ENCODE measurements at regions of chr2 and their contacts with region 1.

Region 1: DNA sequence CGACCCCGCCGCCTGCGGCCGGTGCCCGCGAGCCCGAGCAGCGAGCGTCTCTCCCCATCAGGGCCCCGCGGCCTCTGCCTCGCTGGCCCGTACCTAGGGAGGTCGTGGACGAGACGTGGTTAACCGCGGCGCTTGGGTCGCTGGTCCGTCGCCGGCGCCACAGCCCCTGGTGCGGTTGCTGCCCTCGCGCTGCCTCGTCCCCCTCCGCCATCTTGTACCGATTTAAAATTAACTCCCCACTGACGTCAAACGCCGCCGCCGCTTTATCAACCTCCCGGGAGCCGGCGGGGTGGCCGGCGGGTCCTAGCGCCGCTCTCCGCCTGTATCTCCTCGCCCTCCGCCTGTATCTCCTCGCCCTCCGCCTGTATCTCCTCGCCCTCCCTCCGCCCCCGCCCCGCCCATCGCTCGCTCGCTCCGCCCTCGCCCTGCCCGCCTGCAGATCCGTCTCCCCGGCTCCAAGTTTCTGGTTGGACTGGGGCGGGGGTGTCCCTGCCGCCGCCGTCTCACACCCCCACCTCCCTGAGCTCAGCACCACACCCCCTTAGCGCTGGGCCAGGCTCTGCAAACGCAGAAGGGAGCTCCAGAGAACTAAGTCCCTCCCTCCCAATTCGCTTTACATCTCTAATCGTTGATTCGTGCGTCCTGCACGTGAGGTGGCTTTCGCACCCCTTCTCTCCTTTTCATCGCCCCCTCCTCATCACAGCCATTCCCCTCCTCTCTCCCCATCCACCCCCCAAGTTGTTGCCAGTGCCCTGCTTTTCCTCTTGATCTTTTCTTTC is at the start of gene ATL2:
- DNase-seq: peak; percentile 91 to 97 (median 92)
- ATAC-seq: peak; percentile 80
- H3K4me3 ChIP-seq: peak within 1 kb of the TSS; percentile 91
- H3K27ac ChIP-seq: peak within 1 kb of the TSS; percentile 96
- H3K4me1 ChIP-seq: peaks cover 11 to 34% of the 10 kb centered on the region in 2 experiments
- H3K27me3 ChIP-seq: no peaks in the 10 kb centered on the region
- CTCF ChIP-seq: no peak
- EP300 ChIP-seq: peak; percentile 40
- POLR2A ChIP-seq: peak; percentile 92
- RAD21 ChIP-seq: no peak
- polyA plus RNA-seq, gene ATL2: 12.0 to 18.3 TPM

Region 2: GRCh38 chr2:38362232-38362631 is 15.0 kb before region 1 on chr2:
- CTCF ChIA-PET with region 1: no interaction called
- POLR2A ChIA-PET with region 1: interaction called, 111 read pairs
- in situ Hi-C with region 1: no loop called
- intact Hi-C with region 1: no loop called
- DNase-seq: no peak
- ATAC-seq: no peak
- H3K4me3 ChIP-seq: no peak overlapping the region
- H3K27ac ChIP-seq: no peak overlapping the region
- H3K4me1 ChIP-seq: peaks cover 22 to 45% of the 10 kb centered on the region in 2 experiments
- H3K27me3 ChIP-seq: no peaks in the 10 kb centered on the region
- CTCF ChIP-seq: no peak
- EP300 ChIP-seq: no peak
- POLR2A ChIP-seq: no peak
- RAD21 ChIP-seq: no peak

Region 3: DNA sequence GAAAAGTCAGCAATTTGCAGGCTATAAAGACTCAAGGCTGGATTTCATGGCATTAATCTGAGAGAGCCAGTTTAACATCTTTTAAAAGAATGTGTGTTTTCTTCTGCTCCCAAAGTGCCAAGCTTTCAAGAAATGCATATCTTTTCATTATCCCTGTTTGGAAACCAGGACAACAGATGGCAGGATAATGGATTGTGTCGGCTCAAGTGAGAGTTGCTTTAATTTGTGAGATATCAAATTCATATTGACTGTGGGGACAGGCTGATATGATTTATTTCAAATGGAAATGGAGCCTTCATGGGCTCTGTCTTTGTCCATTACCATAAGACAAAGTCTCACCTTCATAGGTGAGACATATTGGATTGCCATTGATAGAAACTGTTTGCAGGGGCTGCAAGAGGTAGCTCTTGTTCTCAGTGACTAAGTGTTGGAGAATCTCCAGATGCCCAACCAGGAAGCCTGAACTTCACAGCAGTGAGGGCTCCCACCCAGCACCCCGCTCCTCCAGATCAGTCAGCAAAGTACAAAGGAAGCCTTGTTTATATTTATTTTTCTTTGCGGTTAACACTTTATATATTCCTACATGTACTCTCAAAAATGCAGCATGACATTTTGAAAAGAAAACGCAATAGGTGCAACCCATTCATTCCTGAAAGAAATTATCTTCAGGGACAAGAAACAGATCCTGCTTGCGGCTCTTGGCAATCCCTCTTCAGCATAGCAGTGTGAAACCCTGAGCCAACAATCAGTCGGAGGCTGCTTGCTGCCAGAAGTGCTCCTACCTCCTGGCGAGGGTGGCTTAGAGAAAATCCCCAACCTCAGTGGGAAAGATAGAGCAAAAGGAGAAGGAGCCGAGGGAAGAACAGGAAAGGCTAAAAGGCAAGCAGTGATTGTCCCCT is 65.7 kb after region 1 on chr2:
- CTCF ChIA-PET with region 1: no interaction called
- POLR2A ChIA-PET with region 1: no interaction called
- in situ Hi-C with region 1: no loop called
- intact Hi-C with region 1: loop called (anchors 5 kb)
- DNase-seq: no peak
- ATAC-seq: no peak
- H3K4me3 ChIP-seq: no peak overlapping the region
- H3K27ac ChIP-seq: no peak overlapping the region
- H3K4me1 ChIP-seq: peaks cover 0 to 20% of the 10 kb centered on the region in 2 experiments; a peak in 4 of 5 replicates
- H3K27me3 ChIP-seq: peaks cover 8 to 19% of the 10 kb centered on the region in 2 experiments; a peak in 4 of 5 replicates
- CTCF ChIP-seq: no peak
- EP300 ChIP-seq: no peak
- POLR2A ChIP-seq: no peak
- RAD21 ChIP-seq: no peak

Region 4: GRCh38 chr2:38462109-38462759 is 85.0 kb after region 1 on chr2:
- CTCF ChIA-PET with region 1: no interaction called
- POLR2A ChIA-PET with region 1: no interaction called
- in situ Hi-C with region 1: no loop called
- intact Hi-C with region 1: no loop called
- DNase-seq: peak; percentile 39 to 70 (median 54)
- ATAC-seq: peak; percentile 84
- H3K4me3 ChIP-seq: no peak overlapping the region
- H3K27ac ChIP-seq: no peak overlapping the region
- H3K4me1 ChIP-seq: peaks cover 4 to 8% of the 10 kb centered on the region in 2 experiments; a peak in 4 of 5 replicates
- H3K27me3 ChIP-seq: peaks cover 0 to 9% of the 10 kb centered on the region in 2 experiments; a peak in 1 of 5 replicates
- CTCF ChIP-seq: no peak
- EP300 ChIP-seq: no peak
- POLR2A ChIP-seq: no peak
- RAD21 ChIP-seq: no peak

Region 5: DNA sequence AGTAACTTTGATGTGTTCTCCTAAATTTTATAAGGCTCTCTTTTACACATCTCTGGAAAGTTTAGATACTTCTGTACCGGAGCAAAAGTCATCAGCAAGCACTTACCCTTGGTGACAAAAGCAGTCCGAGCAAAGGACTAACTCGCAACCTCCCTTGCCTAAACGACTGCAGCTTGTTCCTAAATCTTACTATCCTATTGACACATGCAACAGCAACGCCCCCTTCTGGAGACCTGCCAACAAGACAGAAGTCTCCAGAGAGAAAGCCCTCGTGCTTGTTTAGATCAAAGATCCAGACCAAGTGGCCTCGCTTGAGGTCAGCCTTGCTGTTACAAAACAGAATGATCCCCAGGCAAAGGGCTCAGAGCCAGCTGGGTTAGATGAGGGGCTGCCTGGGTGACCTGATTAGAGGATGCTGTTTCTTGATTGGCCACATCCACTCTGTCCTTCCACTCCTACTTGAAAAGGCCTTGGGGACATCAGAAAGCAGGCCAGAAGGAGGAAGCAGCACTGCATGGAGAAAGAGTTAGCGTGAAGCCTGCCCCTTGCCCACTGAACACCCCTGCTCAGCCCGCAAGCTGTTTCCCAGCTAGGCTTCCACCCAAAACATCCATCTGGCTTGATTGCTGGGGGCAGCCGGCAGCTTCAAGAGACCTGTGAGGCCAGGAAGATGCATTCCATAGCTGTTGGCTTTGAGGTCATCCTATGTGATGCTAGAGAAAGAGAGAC is 131.2 kb after region 1 on chr2:
- CTCF ChIA-PET with region 1: no interaction called
- POLR2A ChIA-PET with region 1: interaction called, 4 read pairs
- in situ Hi-C with region 1: no loop called
- intact Hi-C with region 1: loop called (anchors 1 kb)
- DNase-seq: peak; percentile 79 to 95 (median 80)
- ATAC-seq: peak; percentile 87
- H3K4me3 ChIP-seq: no peak overlapping the region
- H3K27ac ChIP-seq: peak overlapping the region; percentile 21; the same call in 1 of the 3 replicates
- H3K4me1 ChIP-seq: peaks cover 15 to 27% of the 10 kb centered on the region in 2 experiments
- H3K27me3 ChIP-seq: no peaks in the 10 kb centered on the region
- CTCF ChIP-seq: peak; percentile 78 to 88 (median 87)
- EP300 ChIP-seq: 0 out of 2 replicates have a peak, but pooled peaks have one; percentile 18
- POLR2A ChIP-seq: no peak
- RAD21 ChIP-seq: peak; percentile 85 to 90

Measured in K562 (cell line).